Caco-2 (cell line): ENCODE measurements at regions of chr2 and their contacts with region 1.

Region 1: GRCh38 chr2:241271641-241272297 is 43.7 kb downstream of the HDLBP start:
- DNase-seq: peak; percentile 62 to 71
- H3K4me3 ChIP-seq: peak overlapping the region; percentile 49
- H3K4me3 Mint-ChIP-seq: peak overlapping the region; percentile 77
- H3K27ac Mint-ChIP-seq: peak overlapping the region; percentile 76
- H3K4me1 ChIP-seq: peaks cover 11% of the 10 kb centered on the region; the same call in 1 of the 2 replicates
- H3K4me1 Mint-ChIP-seq: peaks cover 38% of the 10 kb centered on the region
- H3K27me3 ChIP-seq: no peaks in the 10 kb centered on the region
- H3K27me3 Mint-ChIP-seq: no peaks in the 10 kb centered on the region
- CTCF ChIP-seq: no peak

Region 2: DNA sequence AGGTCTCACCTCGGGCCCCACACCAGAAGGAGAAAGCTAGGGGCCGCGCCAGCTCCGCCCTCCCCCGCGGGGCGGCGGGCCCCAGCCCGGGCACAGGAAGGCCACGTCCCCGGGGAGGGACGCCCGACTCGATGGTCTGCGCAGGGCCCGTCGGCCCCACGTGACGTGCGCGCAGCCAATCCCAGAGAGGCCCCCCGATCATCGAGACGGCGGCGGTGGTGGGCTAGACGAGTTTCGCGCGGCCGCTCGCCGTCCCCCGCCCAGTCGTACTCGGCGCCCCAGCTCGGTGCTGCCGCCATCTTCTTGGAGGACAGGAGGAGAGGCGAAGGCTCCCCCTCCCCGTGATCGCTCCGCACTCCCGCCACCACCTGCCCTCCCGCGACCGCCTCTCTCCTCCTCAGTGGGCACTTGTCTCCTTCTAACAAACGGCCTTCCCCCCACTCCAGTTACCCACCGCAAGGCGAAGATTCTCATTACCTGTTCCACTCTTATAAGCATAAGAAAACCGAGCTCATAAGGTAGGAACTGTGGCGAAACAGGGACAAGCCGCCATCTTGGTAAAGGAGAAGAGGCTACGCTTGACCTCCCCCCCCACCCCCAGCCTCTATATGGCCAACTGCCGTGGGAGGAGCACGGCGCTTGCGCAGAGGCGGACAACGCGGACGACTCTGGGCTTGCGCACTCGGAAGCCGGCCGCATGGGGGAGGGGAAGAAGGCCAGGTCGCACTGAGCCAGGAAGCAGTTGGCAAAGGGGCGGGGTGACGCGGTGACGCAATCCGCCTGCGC is 43.5 kb after region 1 on chr2 and contains the start of gene HDLBP:
- CTCF ChIA-PET with region 1: no interaction called
- POLR2A ChIA-PET with region 1: interaction called, 7 read pairs
- intact Hi-C with region 1: loop called (anchors 2 kb)
- DNase-seq: peak; percentile 97 to 98
- H3K4me3 ChIP-seq: peak within 1 kb of the TSS; percentile 92
- H3K4me3 Mint-ChIP-seq: peak within 1 kb of the TSS; percentile 100
- H3K27ac Mint-ChIP-seq: peak within 1 kb of the TSS; percentile 100
- H3K4me1 ChIP-seq: peaks cover 18% of the 10 kb centered on the region; the same call in 1 of the 2 replicates
- H3K4me1 Mint-ChIP-seq: peaks cover 17% of the 10 kb centered on the region
- H3K27me3 ChIP-seq: no peaks in the 10 kb centered on the region
- H3K27me3 Mint-ChIP-seq: no peaks in the 10 kb centered on the region
- CTCF ChIP-seq: no peak
- total RNA-seq, gene HDLBP: 350 and 379 TPM in 2 replicates

Region 3: DNA sequence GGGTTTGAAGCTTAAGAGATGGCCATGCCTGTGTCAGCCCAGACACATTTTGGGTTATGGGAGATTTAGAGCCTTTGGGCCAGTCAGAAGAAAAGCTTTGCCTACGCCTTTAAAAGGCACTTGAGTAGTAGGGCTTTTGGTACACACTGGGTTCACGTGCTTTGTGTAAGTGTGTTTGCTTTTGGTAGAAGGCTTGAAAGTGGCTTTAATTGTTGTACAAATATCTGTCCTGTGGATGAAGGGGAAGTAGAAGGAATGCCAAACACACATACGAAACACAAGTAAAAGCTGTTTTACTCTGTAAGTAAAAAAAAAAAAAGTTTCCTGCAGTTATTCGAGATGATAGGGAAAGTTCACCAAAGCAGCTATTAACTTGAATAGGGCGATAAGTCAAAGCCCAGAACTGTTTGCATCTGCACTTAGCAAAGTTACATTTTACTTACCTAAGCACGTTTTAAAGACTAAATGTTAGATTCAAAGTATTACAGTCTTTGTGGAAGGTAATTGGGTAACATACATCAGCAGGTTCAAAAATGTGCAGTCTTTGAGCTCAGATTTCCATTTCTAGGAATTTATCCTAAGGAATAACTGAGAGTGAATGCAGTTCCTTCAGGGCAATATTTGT is 161.2 kb after region 1 on chr2:
- CTCF ChIA-PET with region 1: no interaction called
- POLR2A ChIA-PET with region 1: no interaction called
- intact Hi-C with region 1: no loop called
- DNase-seq: peak in 1 of 2 experiments; percentile 4
- H3K4me3 ChIP-seq: no peak overlapping the region
- H3K4me3 Mint-ChIP-seq: no peak overlapping the region
- H3K27ac Mint-ChIP-seq: no peak overlapping the region
- H3K4me1 ChIP-seq: no peaks in the 10 kb centered on the region
- H3K4me1 Mint-ChIP-seq: peaks cover 7% of the 10 kb centered on the region
- H3K27me3 ChIP-seq: no peaks in the 10 kb centered on the region
- H3K27me3 Mint-ChIP-seq: no peaks in the 10 kb centered on the region
- CTCF ChIP-seq: no peak